GM10248 (cell line): ENCODE measurements at regions of chr11 and their contacts with region 1.

Region 1: GRCh38 chr11:47932544-47932943 is 47.8 kb upstream of the PTPRJ start:
- DNase-seq: no peak
- CTCF ChIP-seq: no peak

Region 2: GRCh38 chr11:47917643-47918369 is 14.7 kb before region 1 on chr11:
- CTCF ChIA-PET with region 1: interaction called, 41 read pairs
- POLR2A ChIA-PET with region 1: no interaction called
- DNase-seq: no peak
- CTCF ChIP-seq: no peak

Region 3: GRCh38 chr11:47955061-47955755 is 22.7 kb after region 1 on chr11:
- CTCF ChIA-PET with region 1: interaction called, 33 read pairs
- POLR2A ChIA-PET with region 1: no interaction called
- DNase-seq: no peak
- CTCF ChIP-seq: no peak

Region 4: GRCh38 chr11:47980245-47981049 is 47.9 kb after region 1 on chr11 and contains the start of gene PTPRJ:
- CTCF ChIA-PET with region 1: interaction called, 10 read pairs
- POLR2A ChIA-PET with region 1: no interaction called
- DNase-seq: peak; percentile 74
- CTCF ChIP-seq: no peak

Region 5: DNA sequence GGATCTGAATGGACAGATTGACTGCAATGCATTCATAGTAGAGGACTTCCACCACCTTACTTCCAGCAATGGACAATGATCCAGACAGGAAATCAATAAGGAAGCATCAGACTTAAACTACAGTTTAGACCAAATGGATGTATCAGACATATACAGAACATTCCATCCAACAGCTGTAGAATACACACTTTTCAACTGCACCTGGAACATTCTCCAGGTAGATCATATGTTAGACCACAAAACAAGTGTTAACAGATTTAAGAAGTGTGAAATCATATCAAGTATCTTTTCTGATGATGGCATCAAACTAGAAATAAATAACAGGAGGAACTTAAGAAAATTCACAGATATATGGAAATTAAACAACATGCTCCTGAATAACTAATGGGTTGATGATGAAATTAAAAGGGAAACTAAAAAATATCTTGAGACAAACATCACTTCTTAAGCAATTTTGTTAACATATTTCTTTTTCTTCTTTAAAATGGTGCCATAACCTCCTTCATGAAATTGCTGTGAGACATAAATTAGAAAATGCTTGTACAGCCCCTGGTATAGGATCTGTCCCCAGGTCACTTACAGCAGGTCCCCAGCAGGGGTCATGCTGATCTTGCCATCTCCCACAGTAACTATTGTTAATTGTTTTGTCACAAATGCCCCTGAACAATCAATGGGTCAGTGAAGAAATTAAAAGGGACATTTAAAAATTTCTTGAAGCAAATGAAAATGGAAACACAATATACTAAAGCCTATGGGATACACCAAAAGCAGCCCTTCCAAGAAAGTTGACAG is 184.1 kb after region 1 on chr11:
- CTCF ChIA-PET with region 1: interaction called, 178 read pairs
- POLR2A ChIA-PET with region 1: no interaction called
- DNase-seq: no peak
- CTCF ChIP-seq: no peak

Region 6: DNA sequence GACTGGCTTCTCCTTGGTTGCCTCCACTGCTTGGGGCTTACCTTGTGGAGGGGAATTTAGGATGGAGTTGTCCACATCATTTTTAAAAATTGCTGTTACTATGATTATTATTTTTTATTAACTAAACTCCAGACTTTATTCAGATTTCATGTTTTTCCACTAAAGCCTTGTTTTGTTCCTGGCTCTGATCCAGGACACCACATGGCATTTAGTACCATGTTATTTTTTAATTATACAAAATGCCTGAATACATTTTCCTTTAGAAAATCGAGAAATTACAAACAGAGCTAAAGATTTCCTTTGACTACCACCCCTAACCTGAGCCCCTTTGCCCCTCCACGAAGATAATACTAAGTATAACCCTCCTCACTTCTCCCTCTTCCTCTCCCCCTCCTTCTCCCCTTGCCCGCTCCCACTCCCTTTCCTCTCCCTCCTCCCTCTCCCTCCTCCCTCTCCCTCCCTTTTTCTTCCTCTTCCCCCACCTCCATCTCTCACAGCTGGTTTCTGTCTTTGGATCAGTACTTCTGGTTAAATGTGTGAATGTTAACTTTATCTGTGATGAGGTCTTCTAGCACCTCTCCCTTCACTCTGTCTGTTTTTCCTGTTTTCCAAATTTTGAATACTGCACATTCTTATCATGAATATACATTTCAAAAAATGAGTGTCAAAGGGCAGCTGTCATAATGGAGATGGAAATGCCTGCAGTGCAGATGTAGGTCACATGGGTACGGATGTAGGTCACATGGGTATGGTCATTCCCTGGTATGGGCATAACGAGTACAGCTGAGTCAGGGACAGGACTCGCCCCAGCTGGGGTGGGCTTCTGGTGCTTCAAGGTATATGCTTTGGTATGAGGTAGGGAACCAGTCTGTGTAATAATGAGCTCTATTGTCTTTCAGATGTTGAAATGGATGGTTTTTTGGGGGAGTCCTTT is 229.7 kb after region 1 on chr11:
- CTCF ChIA-PET with region 1: no interaction called
- POLR2A ChIA-PET with region 1: no interaction called
- DNase-seq: no peak
- CTCF ChIP-seq: no peak